HepG2 (cell line): ENCODE measurements at regions of chr1 and their contacts with region 1.

Region 1: GRCh38 chr1:160046494-160047110 is 14.8 kb upstream of the PIGM start:
- DNase-seq: peak; percentile 69
- ATAC-seq: peak; percentile 82
- H3K4me3 ChIP-seq: peak overlapping the region in 2 of 3 experiments; percentile 24 to 53; a peak in 4 of 6 replicates
- H3K27ac ChIP-seq: peak overlapping the region; percentile 64
- H3K4me1 ChIP-seq: peaks cover 79% of the 10 kb centered on the region
- H3K27me3 ChIP-seq: no peaks in the 10 kb centered on the region
- CTCF ChIP-seq: peak; percentile 74
- EP300 ChIP-seq: no peak
- POLR2A ChIP-seq: no peak
- RAD21 ChIP-seq: peak; percentile 66

Region 2: GRCh38 chr1:159817276-159818041 is 229.1 kb before region 1 on chr1:
- CTCF ChIA-PET with region 1: no interaction called
- POLR2A ChIA-PET with region 1: no interaction called
- in situ Hi-C with region 1: no loop called
- intact Hi-C with region 1: no loop called
- DNase-seq: peak; percentile 70
- ATAC-seq: peak; percentile 72
- H3K4me3 ChIP-seq: no peak overlapping the region
- H3K27ac ChIP-seq: no peak overlapping the region
- H3K4me1 ChIP-seq: no peaks in the 10 kb centered on the region
- H3K27me3 ChIP-seq: no peaks in the 10 kb centered on the region; a peak in 1 of 5 replicates
- CTCF ChIP-seq: no peak
- EP300 ChIP-seq: peak in 1 of 2 experiments; percentile 19; a peak in 1 of 4 replicates
- POLR2A ChIP-seq: no peak
- RAD21 ChIP-seq: no peak

Region 3: GRCh38 chr1:160031365-160032164 is 15.0 kb before region 1 on chr1 and contains the start of gene PIGM:
- CTCF ChIA-PET with region 1: no interaction called
- POLR2A ChIA-PET with region 1: interaction called, 11 read pairs
- in situ Hi-C with region 1: no loop called
- intact Hi-C with region 1: no loop called
- DNase-seq: peak; percentile 94
- ATAC-seq: peak; percentile 98
- H3K4me3 ChIP-seq: peak within 1 kb of the TSS; percentile 72 to 92 (median 84)
- H3K27ac ChIP-seq: peak within 1 kb of the TSS; percentile 76
- H3K4me1 ChIP-seq: peaks cover 28% of the 10 kb centered on the region
- H3K27me3 ChIP-seq: no peaks in the 10 kb centered on the region; a peak in 1 of 5 replicates
- CTCF ChIP-seq: peak; percentile 17; the same call in 1 of the 2 replicates
- EP300 ChIP-seq: 0 out of 4 replicates have a peak, but pooled peaks of 1 of the 2 experiments have one; percentile 16
- POLR2A ChIP-seq: peak; percentile 53 to 78; a peak in 3 of 4 replicates
- RAD21 ChIP-seq: no peak
- total RNA-seq, gene PIGM: 2.9 and 4.6 TPM in 2 replicates

Region 4: GRCh38 chr1:160070243-160071163 is 23.9 kb after region 1 on chr1:
- CTCF ChIA-PET with region 1: no interaction called
- POLR2A ChIA-PET with region 1: interaction called, 14 read pairs
- in situ Hi-C with region 1: no loop called
- intact Hi-C with region 1: no loop called
- DNase-seq: peak; percentile 81
- ATAC-seq: peak; percentile 95
- H3K4me3 ChIP-seq: peak overlapping the region; percentile 80 to 87 (median 83)
- H3K27ac ChIP-seq: peak overlapping the region; percentile 39
- H3K4me1 ChIP-seq: peaks cover 83% of the 10 kb centered on the region
- H3K27me3 ChIP-seq: no peaks in the 10 kb centered on the region; a peak in 1 of 5 replicates
- CTCF ChIP-seq: no peak
- EP300 ChIP-seq: no peak
- POLR2A ChIP-seq: peak in 1 of 2 experiments; percentile 46; a peak in 1 of 4 replicates
- RAD21 ChIP-seq: no peak

Region 5: DNA sequence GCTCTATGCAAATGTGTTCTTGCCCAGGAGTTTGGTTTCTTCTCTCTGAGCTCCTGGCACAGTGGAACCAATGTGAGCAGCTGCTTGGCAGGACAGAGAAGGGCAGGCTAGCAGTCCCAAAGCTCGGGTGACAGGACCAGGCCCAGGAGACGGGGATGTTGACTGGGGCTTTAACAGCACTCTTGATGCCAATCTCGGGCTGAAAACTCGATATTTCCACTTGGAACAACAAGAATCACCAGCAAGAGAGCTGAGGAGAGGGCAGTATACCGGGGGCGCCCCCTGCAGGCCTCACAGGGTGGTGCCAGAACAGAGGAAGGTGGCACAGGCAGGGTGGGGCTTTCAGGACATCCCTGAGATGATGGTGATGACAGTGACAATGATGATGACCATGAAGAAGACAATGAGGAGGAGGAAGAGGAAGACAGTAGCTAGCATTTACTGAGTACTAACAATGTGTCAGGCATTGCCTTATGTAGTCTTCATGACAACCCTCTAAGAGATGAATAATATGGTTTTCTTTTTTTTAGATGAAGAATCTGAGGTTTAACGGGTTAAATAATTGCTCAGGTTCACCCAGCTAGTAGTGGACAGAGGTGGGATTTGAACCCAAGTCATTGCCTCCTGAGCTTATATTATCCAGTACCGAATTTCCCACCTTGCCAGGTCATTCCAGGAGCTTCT is 32.1 kb after region 1 on chr1:
- CTCF ChIA-PET with region 1: interaction called, 29 read pairs
- POLR2A ChIA-PET with region 1: interaction called, 8 read pairs
- in situ Hi-C with region 1: loop called (anchors 5 kb)
- intact Hi-C with region 1: loop called (anchors 1 kb)
- DNase-seq: peak; percentile 61
- ATAC-seq: peak; percentile 90
- H3K4me3 ChIP-seq: 0 out of 6 replicates have a peak overlapping the region, but pooled peaks of 1 of the 3 experiments have one; percentile 32
- H3K27ac ChIP-seq: no peak overlapping the region
- H3K4me1 ChIP-seq: peaks cover 64% of the 10 kb centered on the region
- H3K27me3 ChIP-seq: no peaks in the 10 kb centered on the region
- CTCF ChIP-seq: peak; percentile 90
- EP300 ChIP-seq: no peak
- POLR2A ChIP-seq: no peak
- RAD21 ChIP-seq: peak; percentile 80

Region 6: GRCh38 chr1:160083968-160084770 is 37.6 kb after region 1 on chr1:
- CTCF ChIA-PET with region 1: interaction called, 29 read pairs
- POLR2A ChIA-PET with region 1: interaction called, 5 read pairs
- in situ Hi-C with region 1: loop called (anchors 5 kb)
- intact Hi-C with region 1: no loop called
- DNase-seq: no peak
- ATAC-seq: peak; percentile 20; the same call in 2 of the 3 replicates
- H3K4me3 ChIP-seq: no peak overlapping the region
- H3K27ac ChIP-seq: no peak overlapping the region
- H3K4me1 ChIP-seq: peaks cover 21% of the 10 kb centered on the region
- H3K27me3 ChIP-seq: no peaks in the 10 kb centered on the region
- CTCF ChIP-seq: peak; percentile 70
- EP300 ChIP-seq: no peak
- POLR2A ChIP-seq: no peak
- RAD21 ChIP-seq: peak; percentile 30; the same call in 1 of the 2 replicates